ENCODE measurements at regions of chr19 and their contacts with region 1.

Region 1: GRCh38 chr19:36214386-36215275 is at the starts of genes ZNF146 and ZNF565:
- DNase-seq: peak; percentile 96 to 98
- ATAC-seq: peak; percentile 98
- H3K4me3 ChIP-seq: peak within 1 kb of the TSS; percentile 76 to 93 (median 77)
- H3K27ac ChIP-seq: peak within 1 kb of the TSS; percentile 89 to 98 (median 96)
- H3K4me1 ChIP-seq: peaks cover 28 to 29% of the 10 kb centered on the region in 2 donors
- H3K27me3 ChIP-seq: no peaks in the 10 kb centered on the region
- CTCF ChIP-seq: peak in 1 of 5 experiments; percentile 8
- POLR2A ChIP-seq: peak; percentile 78 to 87
- total RNA-seq, gene ZNF146: 47.8 to 108 (median 91.2) TPM
- total RNA-seq, gene ZNF565: 1.7 to 5.3 (median 2.3) TPM

Region 2: DNA sequence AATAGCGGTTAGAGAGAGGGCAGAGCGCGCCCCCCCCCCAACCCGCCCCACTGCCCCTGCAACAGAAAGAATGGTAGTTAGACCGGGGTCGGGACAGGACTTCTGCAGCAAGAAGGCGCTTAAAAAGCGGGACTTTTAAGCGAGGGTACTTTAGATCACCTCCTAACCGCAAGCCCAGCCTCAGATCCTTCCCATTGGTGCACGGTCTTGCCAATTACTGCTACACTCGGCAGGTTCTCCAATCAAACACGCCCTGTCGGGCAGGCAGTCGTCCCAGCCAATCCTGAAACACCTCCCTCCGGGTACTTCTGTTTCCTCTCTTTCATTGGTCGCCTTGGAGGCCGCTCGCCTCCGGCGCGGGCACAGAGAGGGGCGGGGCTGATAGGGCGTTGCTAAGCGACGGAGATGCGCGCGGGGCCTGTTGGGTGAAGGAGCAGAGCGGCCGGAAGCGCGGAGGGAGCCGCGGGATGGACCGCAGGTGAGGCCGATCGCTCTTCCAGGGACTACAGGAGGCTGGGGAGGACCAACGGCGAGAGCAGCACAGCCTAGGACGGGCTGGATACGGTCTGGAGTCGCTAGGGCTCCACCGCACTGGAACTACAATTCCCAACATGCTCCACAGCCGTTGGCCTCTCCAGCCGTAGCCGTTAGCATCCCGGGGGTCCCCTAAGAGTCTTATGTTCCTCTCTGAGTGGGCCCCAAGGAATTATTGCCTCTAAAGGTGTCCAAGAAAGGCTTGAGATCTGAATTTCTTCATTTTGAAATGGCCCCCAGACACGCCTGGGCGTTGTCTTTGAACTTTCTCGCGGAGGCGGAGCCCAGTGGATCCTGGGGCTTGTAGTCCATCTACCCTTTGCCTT is 456.7 kb before region 1 on chr19 and contains the start of gene PROSER3:
- in situ Hi-C with region 1: no loop called
- intact Hi-C with region 1: loop called (anchors 10 kb)
- DNase-seq: peak; percentile 99 to 100
- ATAC-seq: peak; percentile 85 to 91
- H3K4me3 ChIP-seq: peak within 1 kb of the TSS; percentile 72 to 84 (median 76)
- H3K27ac ChIP-seq: peak within 1 kb of the TSS; percentile 89 to 97 (median 95)
- H3K4me1 ChIP-seq: peaks cover 28 to 43% of the 10 kb centered on the region in 2 donors
- H3K27me3 ChIP-seq: no peaks in the 10 kb centered on the region
- CTCF ChIP-seq: no peak
- POLR2A ChIP-seq: peak; percentile 56 to 82
- total RNA-seq, gene PROSER3: 0.63 to 4.3 (median 3.0) TPM

Region 3: GRCh38 chr19:36008336-36008978 is 206.2 kb before region 1 on chr19 and contains the start of gene SYNE4:
- in situ Hi-C with region 1: no loop called
- intact Hi-C with region 1: no loop called
- DNase-seq: no peak
- ATAC-seq: no peak
- H3K4me3 ChIP-seq: peak within 1 kb of the TSS; percentile 22 to 46 (median 39)
- H3K27ac ChIP-seq: peak within 1 kb of the TSS in 1 of 4 donors; percentile 33
- H3K4me1 ChIP-seq: peaks cover 3 to 8% of the 10 kb centered on the region in 2 donors
- H3K27me3 ChIP-seq: peaks cover 0 to 5% (median 0%) of the 10 kb centered on the region in 3 donors
- CTCF ChIP-seq: no peak
- POLR2A ChIP-seq: no peak
- total RNA-seq, gene SYNE4: 0.36 TPM in 1 of 4 donors, not detected in the others

Region 4: GRCh38 chr19:36114763-36115452 is 99.7 kb before region 1 on chr19 and contains the start of gene POLR2I:
- in situ Hi-C with region 1: no loop called
- intact Hi-C with region 1: loop called (anchors 1 kb)
- DNase-seq: peak; percentile 100
- ATAC-seq: peak; percentile 98
- H3K4me3 ChIP-seq: peak within 1 kb of the TSS; percentile 69 to 94 (median 82)
- H3K27ac ChIP-seq: peak within 1 kb of the TSS; percentile 86 to 95 (median 92)
- H3K4me1 ChIP-seq: peaks cover 17 to 18% of the 10 kb centered on the region in 2 donors
- H3K27me3 ChIP-seq: no peaks in the 10 kb centered on the region
- CTCF ChIP-seq: no peak
- POLR2A ChIP-seq: peak; percentile 61 to 77
- total RNA-seq, gene POLR2I: 61.0 to 88.7 (median 79.4) TPM

Region 5: DNA sequence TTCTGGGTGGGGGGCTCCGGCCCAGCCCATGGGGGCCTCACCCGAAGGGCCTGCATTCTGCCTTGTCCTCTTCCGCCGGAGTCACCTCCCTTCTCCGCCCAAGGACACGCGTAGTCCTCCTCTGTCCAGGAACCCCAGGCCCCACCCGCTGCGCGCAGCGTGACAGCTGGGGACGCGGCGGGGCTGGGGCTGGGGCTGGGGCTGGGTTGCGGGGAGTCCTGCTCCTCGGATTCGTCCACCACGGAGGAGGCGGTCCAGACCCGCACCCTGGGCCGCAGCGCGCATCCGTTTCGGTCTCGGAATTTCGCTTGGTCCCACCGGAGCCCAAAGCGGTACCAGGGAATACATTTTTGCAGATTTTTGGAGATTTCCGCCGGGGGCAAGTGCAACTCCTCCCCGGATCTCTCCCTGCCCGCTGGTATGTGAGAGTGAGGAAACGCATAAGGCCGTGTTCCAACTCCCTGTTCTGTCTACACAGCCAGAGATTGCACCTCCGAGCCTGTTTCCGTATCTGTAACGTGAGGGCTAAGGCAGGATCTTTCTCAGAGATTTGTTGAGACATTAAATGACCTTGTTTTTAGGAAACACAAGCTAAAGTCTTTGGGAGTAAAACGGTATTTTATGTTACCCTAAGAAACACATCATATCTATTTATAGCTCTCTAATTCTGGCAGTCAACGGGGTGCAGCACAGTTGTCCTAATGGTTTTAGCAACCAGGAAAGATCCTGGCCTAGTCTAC is 62.1 kb before region 1 on chr19 and contains the start of gene COX7A1:
- in situ Hi-C with region 1: no loop called
- intact Hi-C with region 1: loop called (anchors 10 kb)
- DNase-seq: peak; percentile 79 to 91
- ATAC-seq: peak; percentile 78 to 89
- H3K4me3 ChIP-seq: peak within 1 kb of the TSS; percentile 80 to 90 (median 90)
- H3K27ac ChIP-seq: peak within 1 kb of the TSS; percentile 97 to 100 (median 100)
- H3K4me1 ChIP-seq: peaks cover 24 to 29% of the 10 kb centered on the region in 2 donors
- H3K27me3 ChIP-seq: no peaks in the 10 kb centered on the region
- CTCF ChIP-seq: no peak
- POLR2A ChIP-seq: peak; percentile 86 to 87
- total RNA-seq, gene COX7A1: 165 to 421 (median 223) TPM

Region 6: GRCh38 chr19:36330216-36330615 is 115.6 kb after region 1 on chr19:
- in situ Hi-C with region 1: no loop called
- intact Hi-C with region 1: no loop called
- DNase-seq: no peak
- ATAC-seq: no peak
- H3K4me3 ChIP-seq: peak overlapping the region in 1 of 4 donors; percentile 86
- H3K27ac ChIP-seq: no peak overlapping the region
- H3K4me1 ChIP-seq: peaks cover 5 to 12% of the 10 kb centered on the region in 2 donors
- H3K27me3 ChIP-seq: no peaks in the 10 kb centered on the region
- CTCF ChIP-seq: no peak
- POLR2A ChIP-seq: no peak

Region 7: GRCh38 chr19:36371886-36372285 is 157.3 kb after region 1 on chr19:
- in situ Hi-C with region 1: no loop called
- intact Hi-C with region 1: no loop called
- DNase-seq: no peak
- ATAC-seq: no peak
- H3K4me3 ChIP-seq: no peak overlapping the region
- H3K27ac ChIP-seq: no peak overlapping the region
- H3K4me1 ChIP-seq: no peaks in the 10 kb centered on the region
- H3K27me3 ChIP-seq: no peaks in the 10 kb centered on the region
- CTCF ChIP-seq: no peak
- POLR2A ChIP-seq: no peak

Region 8: GRCh38 chr19:36528194-36528920 is 313.7 kb after region 1 on chr19 and contains the start of gene ZNF260:
- in situ Hi-C with region 1: no loop called
- intact Hi-C with region 1: loop called (anchors 1 kb)
- DNase-seq: peak; percentile 96
- ATAC-seq: peak; percentile 99
- H3K4me3 ChIP-seq: peak within 1 kb of the TSS; percentile 71 to 83 (median 80)
- H3K27ac ChIP-seq: peak within 1 kb of the TSS; percentile 83 to 94 (median 90)
- H3K4me1 ChIP-seq: peaks cover 16 to 17% of the 10 kb centered on the region in 2 donors
- H3K27me3 ChIP-seq: no peaks in the 10 kb centered on the region
- CTCF ChIP-seq: no peak
- POLR2A ChIP-seq: peak; percentile 43 to 56
- total RNA-seq, gene ZNF260: 1.3 to 16.3 (median 3.2) TPM

Measured in gastrocnemius medialis (tissue), 4 donors.